ENCODE measurements at regions of chr3 and their contacts with region 1.

Region 1: DNA sequence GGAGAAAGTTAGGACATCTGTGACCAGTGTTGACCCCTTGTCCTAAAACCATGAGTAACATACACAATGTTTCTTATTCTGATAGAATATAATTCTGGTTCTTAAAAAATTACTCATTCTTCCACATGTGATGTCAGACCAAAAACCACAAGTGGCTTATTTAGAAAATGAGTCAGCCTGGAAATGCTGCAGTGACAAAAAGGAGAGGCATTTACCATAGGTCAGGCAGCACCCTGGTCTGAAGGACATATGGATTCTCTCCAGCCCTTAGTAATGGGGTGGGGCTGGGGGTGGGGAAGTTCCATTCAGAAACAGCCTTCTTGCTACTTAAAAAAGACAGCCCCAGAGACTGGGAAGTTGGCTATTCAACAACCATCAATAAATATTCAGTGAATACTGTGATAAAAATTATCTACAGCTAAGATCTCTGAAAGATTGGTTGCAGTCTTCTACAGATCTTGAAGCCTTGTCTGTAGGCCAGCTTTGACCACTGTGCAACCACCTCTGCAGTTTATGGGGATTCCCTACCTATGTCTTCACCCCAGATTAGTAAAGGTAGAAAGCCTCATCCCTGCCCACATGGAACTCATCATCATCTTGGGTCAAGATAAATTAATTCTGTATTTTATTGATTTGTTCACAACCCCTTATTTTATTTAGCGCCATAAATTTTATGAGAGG is 34.9 kb upstream of the TIMP4 start:
- DNase-seq: peak; percentile 87

Region 2: GRCh38 chr3:12235691-12236090 is 42.1 kb after region 1 on chr3:
- in situ Hi-C with region 1: loop called (anchors 5 kb)
- DNase-seq: no peak

Region 3: GRCh38 chr3:12423918-12424630 is 230.4 kb after region 1 on chr3:
- in situ Hi-C with region 1: no loop called
- DNase-seq: peak; percentile 89

Measured in Caki2 (cell line).